HepG2 (cell line): ENCODE measurements at regions of chr20 and their contacts with region 1.

Region 1: GRCh38 chr20:22523499-22524392 is 60.6 kb downstream of the FOXA2 start:
- DNase-seq: peak; percentile 99
- ATAC-seq: peak; percentile 81
- H3K4me3 ChIP-seq: peak overlapping the region; percentile 39 to 69 (median 50); a peak in 5 of 6 replicates
- H3K27ac ChIP-seq: peak overlapping the region; percentile 89
- H3K4me1 ChIP-seq: peaks cover 67% of the 10 kb centered on the region
- H3K27me3 ChIP-seq: no peaks in the 10 kb centered on the region
- CTCF ChIP-seq: no peak
- EP300 ChIP-seq: peak; percentile 46 to 90
- POLR2A ChIP-seq: peak; percentile 74 to 85
- RAD21 ChIP-seq: peak; percentile 72

Region 2: GRCh38 chr20:22453239-22454080 is 70.3 kb before region 1 on chr20:
- CTCF ChIA-PET with region 1: no interaction called
- POLR2A ChIA-PET with region 1: interaction called, 17 read pairs
- in situ Hi-C with region 1: no loop called
- intact Hi-C with region 1: no loop called
- DNase-seq: peak; percentile 70
- ATAC-seq: peak; percentile 60; the same call in 2 of the 3 replicates
- H3K4me3 ChIP-seq: no peak overlapping the region
- H3K27ac ChIP-seq: no peak overlapping the region
- H3K4me1 ChIP-seq: peaks cover 27% of the 10 kb centered on the region
- H3K27me3 ChIP-seq: peaks cover 6 to 60% of the 10 kb centered on the region in 2 experiments
- CTCF ChIP-seq: peak; percentile 86
- EP300 ChIP-seq: no peak
- POLR2A ChIP-seq: no peak
- RAD21 ChIP-seq: peak; percentile 80

Region 3: GRCh38 chr20:22490287-22491193 is 33.2 kb before region 1 on chr20:
- CTCF ChIA-PET with region 1: no interaction called
- POLR2A ChIA-PET with region 1: interaction called, 143 read pairs
- in situ Hi-C with region 1: no loop called
- intact Hi-C with region 1: loop called (anchors 1 kb)
- DNase-seq: peak; percentile 100
- ATAC-seq: peak; percentile 99
- H3K4me3 ChIP-seq: peak overlapping the region; percentile 41 to 61 (median 59)
- H3K27ac ChIP-seq: peak overlapping the region; percentile 84
- H3K4me1 ChIP-seq: peaks cover 47% of the 10 kb centered on the region
- H3K27me3 ChIP-seq: no peaks in the 10 kb centered on the region
- CTCF ChIP-seq: peak; percentile 81
- EP300 ChIP-seq: peak; percentile 81 to 92
- POLR2A ChIP-seq: peak; percentile 58 to 75
- RAD21 ChIP-seq: peak; percentile 79

Region 4: DNA sequence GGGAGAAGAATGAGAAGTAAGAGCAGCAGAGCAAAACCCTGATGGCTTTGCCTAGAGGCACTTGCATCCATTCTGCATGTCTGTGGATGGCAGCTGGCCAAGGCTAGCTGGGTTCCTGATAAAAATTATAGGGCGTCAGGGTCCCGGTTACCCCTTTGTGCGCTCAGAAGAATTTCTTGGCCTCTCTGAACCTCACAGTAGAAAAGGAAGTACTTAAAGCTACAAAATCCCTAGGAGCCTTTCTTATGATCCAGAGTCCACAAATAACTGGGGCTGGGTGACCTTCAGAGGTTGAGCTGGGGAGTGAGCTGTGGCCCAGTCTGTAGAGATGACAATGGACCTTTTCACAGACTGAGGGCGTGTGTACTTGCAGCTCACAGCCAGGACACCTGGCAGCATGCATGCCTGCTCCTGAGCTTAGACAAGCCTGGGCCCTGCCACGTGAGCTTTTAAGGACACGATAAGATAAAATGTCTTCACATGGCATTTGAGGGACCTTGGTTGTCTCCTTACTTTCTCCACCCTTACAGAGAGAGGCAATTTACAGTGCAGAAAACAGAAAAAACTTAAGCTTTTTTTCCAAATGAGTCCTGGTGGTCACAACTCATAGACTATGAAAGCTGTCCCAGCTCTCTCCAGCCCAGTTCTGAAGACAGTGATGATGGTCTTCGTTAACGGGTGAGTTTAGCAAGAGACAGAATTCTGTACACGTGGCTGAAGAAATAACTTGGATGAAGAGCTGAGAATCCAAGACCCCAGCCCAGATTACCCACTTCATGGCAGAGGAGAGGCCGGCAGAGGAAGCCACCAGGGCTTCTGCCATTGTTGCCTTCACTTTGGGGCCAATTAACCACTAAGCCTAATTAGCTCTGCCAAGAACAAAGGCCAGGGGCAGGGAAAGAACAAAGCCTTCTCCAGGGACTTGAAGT is 10.3 kb after region 1 on chr20:
- CTCF ChIA-PET with region 1: no interaction called
- POLR2A ChIA-PET with region 1: interaction called, 150 read pairs
- in situ Hi-C with region 1: no loop called
- intact Hi-C with region 1: loop called (anchors 1 kb)
- DNase-seq: peak; percentile 97
- ATAC-seq: peak; percentile 98
- H3K4me3 ChIP-seq: no peak overlapping the region
- H3K27ac ChIP-seq: peak overlapping the region; percentile 77
- H3K4me1 ChIP-seq: peaks cover 89% of the 10 kb centered on the region
- H3K27me3 ChIP-seq: no peaks in the 10 kb centered on the region
- CTCF ChIP-seq: peak; percentile 48
- EP300 ChIP-seq: peak; percentile 80 to 89; a peak in 3 of 4 replicates
- POLR2A ChIP-seq: 0 out of 4 replicates have a peak, but pooled peaks have one; percentile 26 to 48
- RAD21 ChIP-seq: peak; percentile 56; the same call in 1 of the 2 replicates

Region 5: DNA sequence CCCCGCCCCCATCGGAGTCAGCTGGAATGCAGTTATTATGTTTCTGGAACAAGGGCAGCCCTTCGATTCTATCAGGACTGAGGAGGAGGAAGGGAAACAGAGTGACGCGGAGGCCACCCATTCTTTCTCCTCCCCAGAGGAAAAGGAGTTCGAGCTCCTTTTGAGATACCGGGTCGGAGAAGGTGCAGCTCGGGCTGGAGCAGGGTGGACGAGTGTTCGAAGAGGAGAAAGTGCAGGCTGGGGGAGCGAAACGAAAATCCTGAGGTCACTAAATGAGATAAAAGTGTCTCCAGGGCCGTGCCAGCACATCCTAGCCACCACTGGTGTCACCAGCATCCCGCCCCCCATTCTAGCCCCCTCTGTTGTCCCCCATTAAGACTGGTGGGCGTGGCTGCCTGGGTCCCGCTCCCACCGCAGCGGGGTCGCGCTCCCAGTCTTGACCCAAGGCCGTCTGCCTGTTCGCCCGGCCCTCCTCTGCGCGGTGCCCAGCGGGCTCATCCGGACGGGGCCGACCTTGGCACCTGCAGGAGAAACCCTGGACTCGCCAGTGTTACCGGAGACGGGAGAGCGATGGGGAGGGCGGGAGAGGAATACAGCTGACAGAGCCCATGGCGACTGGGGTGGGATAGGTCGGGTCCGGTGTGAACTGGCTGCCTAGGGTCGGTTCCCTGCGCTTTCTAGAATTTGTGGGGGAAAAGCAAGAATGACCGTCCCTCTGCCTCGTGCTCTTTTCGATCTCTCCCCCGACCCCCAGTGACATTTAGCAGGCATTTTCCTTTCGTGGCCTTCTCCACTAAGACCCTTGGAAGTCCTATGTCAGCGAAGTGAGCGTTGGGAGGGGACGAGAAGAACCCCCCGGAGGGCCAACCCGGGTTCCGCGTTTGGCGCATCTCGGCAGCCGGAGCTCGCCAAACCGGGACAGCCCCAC is 44.5 kb after region 1 on chr20:
- CTCF ChIA-PET with region 1: no interaction called
- POLR2A ChIA-PET with region 1: interaction called, 57 read pairs
- in situ Hi-C with region 1: no loop called
- intact Hi-C with region 1: no loop called
- DNase-seq: no peak
- ATAC-seq: no peak
- H3K4me3 ChIP-seq: no peak overlapping the region
- H3K27ac ChIP-seq: no peak overlapping the region
- H3K4me1 ChIP-seq: peaks cover 58% of the 10 kb centered on the region
- H3K27me3 ChIP-seq: no peaks in the 10 kb centered on the region; a peak in 1 of 5 replicates
- CTCF ChIP-seq: no peak
- EP300 ChIP-seq: no peak
- POLR2A ChIP-seq: no peak
- RAD21 ChIP-seq: no peak

Region 6: GRCh38 chr20:23205611-23206041 is 681.9 kb after region 1 on chr20:
- CTCF ChIA-PET with region 1: no interaction called
- POLR2A ChIA-PET with region 1: no interaction called
- in situ Hi-C with region 1: no loop called
- intact Hi-C with region 1: no loop called
- DNase-seq: no peak
- ATAC-seq: peak; percentile 44; the same call in 2 of the 3 replicates
- H3K4me3 ChIP-seq: no peak overlapping the region
- H3K27ac ChIP-seq: no peak overlapping the region
- H3K4me1 ChIP-seq: no peaks in the 10 kb centered on the region
- H3K27me3 ChIP-seq: peaks cover 0 to 14% of the 10 kb centered on the region in 2 experiments; a peak in 2 of 5 replicates
- CTCF ChIP-seq: no peak
- EP300 ChIP-seq: no peak
- POLR2A ChIP-seq: no peak
- RAD21 ChIP-seq: no peak